Heart right ventricle (tissue), 16 donors: ENCODE measurements at regions of chr1 and their contacts with region 1.

Region 1: GRCh38 chr1:11838349-11839272 is 9.0 kb downstream of the NPPA start:
- DNase-seq: peak; percentile 64 to 81
- ATAC-seq: peak; percentile 66 to 82 (median 81)
- H3K4me3 ChIP-seq: no peak overlapping the region
- H3K27ac ChIP-seq: peak overlapping the region in 3 of 10 donors; percentile 66 to 81 (median 79)
- H3K4me1 ChIP-seq: peaks cover 0 to 44% (median 20%) of the 10 kb centered on the region in 9 donors
- H3K27me3 ChIP-seq: no peaks in the 10 kb centered on the region
- CTCF ChIP-seq: peak; percentile 96 to 100 (median 98)

Region 2: DNA sequence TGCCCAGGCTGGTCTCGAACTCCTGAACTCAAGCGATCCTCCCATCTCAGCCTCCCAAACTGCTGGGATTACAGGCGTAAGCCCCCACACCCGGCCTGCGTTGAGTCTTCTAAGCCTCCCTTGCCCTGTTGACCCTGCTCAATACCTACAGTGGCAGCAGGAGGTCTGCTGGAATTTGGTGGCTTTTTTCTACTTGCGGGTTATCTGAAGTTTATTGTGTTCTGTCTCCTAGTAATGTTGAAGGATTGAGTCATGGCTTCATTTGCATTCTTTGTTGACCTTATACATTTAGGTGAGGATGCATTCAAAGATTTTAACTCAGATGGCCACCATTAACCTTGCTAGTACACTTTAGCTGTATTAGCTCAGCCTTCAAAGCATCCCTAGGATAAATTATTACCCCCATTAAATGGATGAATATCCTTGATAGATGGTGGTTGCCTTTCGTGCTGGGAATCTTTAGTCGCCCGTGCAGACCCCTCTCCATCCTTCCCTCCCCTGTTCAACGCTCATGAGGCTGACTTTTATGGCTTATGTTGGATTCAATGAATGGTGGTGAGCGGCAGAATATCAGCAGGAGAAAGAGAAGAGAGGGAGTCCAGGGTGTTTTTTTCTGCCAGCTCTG is 29.8 kb after region 1 on chr1:
- intact Hi-C with region 1: loop called in 1 of 10 experiments (anchors 2 kb)
- DNase-seq: no peak
- ATAC-seq: no peak
- H3K4me3 ChIP-seq: no peak overlapping the region
- H3K27ac ChIP-seq: no peak overlapping the region
- H3K4me1 ChIP-seq: peaks cover 2 to 7% (median 6%) of the 10 kb centered on the region in 9 donors
- H3K27me3 ChIP-seq: no peaks in the 10 kb centered on the region
- CTCF ChIP-seq: no peak

Region 3: GRCh38 chr1:11893907-11894251 is 55.3 kb after region 1 on chr1:
- intact Hi-C with region 1: loop called (anchors 1 to 2 kb)
- DNase-seq: peak; percentile 64 to 76
- ATAC-seq: peak; percentile 82 to 94 (median 90)
- H3K4me3 ChIP-seq: no peak overlapping the region
- H3K27ac ChIP-seq: no peak overlapping the region
- H3K4me1 ChIP-seq: peaks cover 0 to 9% (median 0%) of the 10 kb centered on the region in 9 donors
- H3K27me3 ChIP-seq: peaks cover 10 to 41% (median 36%) of the 10 kb centered on the region in 7 donors
- CTCF ChIP-seq: peak; percentile 86 to 93 (median 90)

Region 4: GRCh38 chr1:11907275-11908094 is 68.9 kb after region 1 on chr1:
- intact Hi-C with region 1: loop called in 1 of 10 experiments (anchors 1 kb)
- DNase-seq: peak; percentile 90 to 91
- ATAC-seq: peak; percentile 79 to 92 (median 86)
- H3K4me3 ChIP-seq: peak overlapping the region in 7 of 10 donors; percentile 49 to 82 (median 65)
- H3K27ac ChIP-seq: peak overlapping the region; percentile 84 to 100 (median 96)
- H3K4me1 ChIP-seq: peaks cover 0 to 22% (median 5%) of the 10 kb centered on the region in 9 donors
- H3K27me3 ChIP-seq: no peaks in the 10 kb centered on the region
- CTCF ChIP-seq: peak; percentile 35 to 98 (median 76)

Region 5: DNA sequence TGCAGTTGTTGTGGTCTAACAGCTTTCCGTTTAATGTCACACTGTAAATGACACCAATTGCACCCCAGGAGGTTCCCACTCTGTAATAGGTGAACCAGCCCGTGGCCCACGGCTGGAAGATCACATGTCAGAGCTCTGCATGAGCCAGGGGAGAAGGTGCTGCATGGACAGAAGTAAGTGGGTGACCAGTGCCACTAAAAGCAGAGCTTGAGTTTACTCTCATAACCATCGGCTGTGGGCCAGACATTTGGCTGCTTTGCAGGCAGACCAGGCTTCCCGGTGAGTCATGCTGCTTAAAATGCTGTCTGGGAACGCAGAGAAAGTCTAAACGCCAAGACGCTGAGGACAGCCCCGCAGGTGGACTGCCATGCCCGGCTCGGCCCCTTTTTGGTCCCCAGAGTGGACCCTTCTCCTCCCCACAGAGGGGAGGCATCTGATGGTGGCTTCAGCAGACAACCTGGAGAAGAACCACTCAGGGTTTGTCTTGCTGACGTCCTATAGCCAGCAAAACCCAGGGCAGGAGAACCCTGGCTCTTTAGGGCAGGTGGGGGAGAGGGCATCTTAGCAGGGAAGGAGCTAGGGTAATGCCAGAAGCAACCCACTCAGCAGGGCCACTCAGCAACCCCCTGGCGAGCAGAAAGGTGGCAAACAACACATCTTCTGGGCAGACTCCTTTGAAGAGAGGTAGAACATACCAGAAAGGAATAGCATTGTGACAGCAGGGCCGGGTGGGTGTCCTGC is 80.3 kb after region 1 on chr1:
- intact Hi-C with region 1: no loop called
- DNase-seq: peak; percentile 61 to 78
- ATAC-seq: peak; percentile 71 to 89 (median 86)
- H3K4me3 ChIP-seq: no peak overlapping the region
- H3K27ac ChIP-seq: peak overlapping the region in 9 of 10 donors; percentile 21 to 81 (median 71)
- H3K4me1 ChIP-seq: peaks cover 18 to 62% (median 58%) of the 10 kb centered on the region in 9 donors
- H3K27me3 ChIP-seq: no peaks in the 10 kb centered on the region
- CTCF ChIP-seq: no peak

Region 6: DNA sequence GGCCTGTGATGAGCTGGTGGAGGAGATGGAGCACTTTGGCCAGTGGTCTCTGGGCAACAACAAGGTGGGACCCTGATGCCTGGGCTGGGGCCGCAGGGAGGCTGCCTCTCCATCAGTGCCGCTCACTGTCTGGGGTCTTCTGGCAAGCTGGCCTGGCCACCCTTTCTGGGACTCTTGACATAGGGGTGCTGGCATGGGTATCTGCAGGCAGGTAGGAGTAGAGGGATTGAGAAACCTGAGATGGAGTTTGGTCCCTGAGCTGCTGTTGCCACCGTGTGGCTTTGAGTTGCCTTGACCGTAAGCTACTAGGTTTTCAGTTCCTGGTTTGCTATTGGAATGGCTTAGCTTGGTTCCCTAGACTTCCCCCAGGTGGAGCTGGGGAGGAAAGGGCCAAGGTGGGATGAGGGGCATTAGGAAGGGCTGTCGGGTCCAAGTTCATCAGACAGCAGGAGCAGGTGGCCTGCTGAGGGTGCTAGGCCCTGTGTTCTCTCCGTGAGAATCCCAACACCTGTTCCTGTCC is 128.5 kb after region 1 on chr1:
- intact Hi-C with region 1: loop called in 9 of 10 experiments (anchors 5 to 10 kb)
- DNase-seq: no peak
- ATAC-seq: peak; percentile 23 to 78 (median 53)
- H3K4me3 ChIP-seq: no peak overlapping the region
- H3K27ac ChIP-seq: no peak overlapping the region
- H3K4me1 ChIP-seq: no peaks in the 10 kb centered on the region
- H3K27me3 ChIP-seq: no peaks in the 10 kb centered on the region
- CTCF ChIP-seq: peak; percentile 12 to 65 (median 52)

Region 7: GRCh38 chr1:12019858-12020509 is 181.4 kb after region 1 on chr1:
- intact Hi-C with region 1: loop called in 2 of 10 experiments (anchors 10 kb)
- DNase-seq: no peak
- ATAC-seq: peak in 7 of 8 donors; percentile 1 to 40 (median 8)
- H3K4me3 ChIP-seq: peak overlapping the region; percentile 77 to 98 (median 90)
- H3K27ac ChIP-seq: peak overlapping the region; percentile 28 to 92 (median 82)
- H3K4me1 ChIP-seq: peaks cover 0 to 18% (median 14%) of the 10 kb centered on the region in 9 donors
- H3K27me3 ChIP-seq: no peaks in the 10 kb centered on the region
- CTCF ChIP-seq: no peak

Region 8: DNA sequence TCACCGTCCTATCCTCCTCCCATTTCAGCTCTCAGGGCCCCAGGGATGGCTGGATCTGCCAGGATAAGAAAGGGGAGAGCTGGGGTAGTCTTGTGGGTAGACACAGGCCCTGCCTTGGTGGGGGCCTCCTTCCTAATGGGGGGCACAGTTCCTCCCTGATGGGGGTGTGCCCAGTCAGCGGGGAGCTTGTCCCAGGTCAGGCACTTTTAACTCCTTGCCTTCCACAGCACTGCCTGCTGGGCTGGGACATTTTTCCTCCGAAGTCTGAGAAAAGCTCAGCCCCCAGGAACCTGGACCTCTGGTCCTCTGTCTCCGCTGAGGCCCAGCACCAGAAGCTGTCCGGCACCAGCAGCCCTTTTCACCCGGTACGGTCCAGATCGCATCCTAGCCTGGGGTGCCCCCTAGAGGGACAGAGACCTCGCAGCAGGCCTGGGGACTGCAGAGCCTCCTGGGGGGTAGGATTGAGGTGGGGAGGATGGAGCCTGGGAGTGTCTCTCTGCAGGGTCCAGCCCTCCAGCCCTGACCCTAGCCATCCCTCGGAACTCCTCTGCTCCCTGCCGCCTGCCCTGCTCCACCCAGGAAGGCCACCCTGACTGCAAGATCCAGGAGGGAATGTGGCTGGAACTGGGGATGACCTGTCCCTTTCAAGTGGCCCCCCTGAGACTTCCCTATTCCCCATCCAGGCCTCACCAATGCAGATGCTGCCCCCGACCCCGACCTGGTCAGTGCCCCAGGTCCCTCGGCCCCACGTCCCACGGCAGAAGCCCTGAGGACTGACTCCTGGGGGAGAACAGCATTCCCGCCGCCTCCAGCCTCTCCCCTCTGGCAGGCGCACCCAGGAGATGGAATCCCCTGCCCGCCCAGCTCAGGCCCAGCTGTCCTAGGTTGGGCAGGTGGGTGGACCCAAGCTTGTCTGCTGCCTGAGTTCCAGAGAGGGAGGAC is 192.7 kb after region 1 on chr1:
- intact Hi-C with region 1: loop called in 3 of 10 experiments (anchors 2 to 10 kb)
- DNase-seq: peak in 1 of 2 donors; percentile 54
- ATAC-seq: peak; percentile 35 to 75 (median 72)
- H3K4me3 ChIP-seq: no peak overlapping the region
- H3K27ac ChIP-seq: no peak overlapping the region
- H3K4me1 ChIP-seq: peaks cover 0 to 17% (median 0%) of the 10 kb centered on the region in 9 donors
- H3K27me3 ChIP-seq: no peaks in the 10 kb centered on the region
- CTCF ChIP-seq: peak; percentile 36 to 68 (median 61)